Endothelial cell of umbilical vein (primary cell): ENCODE measurements at regions of chr9 and their contacts with region 1.

Region 1: GRCh38 chr9:132800038-132800648 is 77.9 kb downstream of the AK8 start:
- DNase-seq: peak; percentile 57
- H3K4me3 ChIP-seq: no peak overlapping the region
- H3K27ac ChIP-seq: no peak overlapping the region
- H3K4me1 ChIP-seq: no peaks in the 10 kb centered on the region
- H3K27me3 ChIP-seq: peaks cover under 1 to 10% of the 10 kb centered on the region in 2 experiments
- CTCF ChIP-seq: peak; percentile 72 to 75
- POLR2A ChIP-seq: no peak

Region 2: GRCh38 chr9:132507746-132508469 is 292.2 kb before region 1 on chr9:
- CTCF ChIA-PET with region 1: interaction called, 9 read pairs
- POLR2A ChIA-PET with region 1: no interaction called
- dilution Hi-C with region 1: no loop called
- intact Hi-C with region 1: loop called (anchors 1 kb)
- DNase-seq: peak; percentile 64
- H3K4me3 ChIP-seq: no peak overlapping the region
- H3K27ac ChIP-seq: no peak overlapping the region
- H3K4me1 ChIP-seq: no peaks in the 10 kb centered on the region
- H3K27me3 ChIP-seq: peaks cover 15 to 19% of the 10 kb centered on the region in 2 experiments
- CTCF ChIP-seq: peak; percentile 70 to 81
- POLR2A ChIP-seq: no peak

Region 3: DNA sequence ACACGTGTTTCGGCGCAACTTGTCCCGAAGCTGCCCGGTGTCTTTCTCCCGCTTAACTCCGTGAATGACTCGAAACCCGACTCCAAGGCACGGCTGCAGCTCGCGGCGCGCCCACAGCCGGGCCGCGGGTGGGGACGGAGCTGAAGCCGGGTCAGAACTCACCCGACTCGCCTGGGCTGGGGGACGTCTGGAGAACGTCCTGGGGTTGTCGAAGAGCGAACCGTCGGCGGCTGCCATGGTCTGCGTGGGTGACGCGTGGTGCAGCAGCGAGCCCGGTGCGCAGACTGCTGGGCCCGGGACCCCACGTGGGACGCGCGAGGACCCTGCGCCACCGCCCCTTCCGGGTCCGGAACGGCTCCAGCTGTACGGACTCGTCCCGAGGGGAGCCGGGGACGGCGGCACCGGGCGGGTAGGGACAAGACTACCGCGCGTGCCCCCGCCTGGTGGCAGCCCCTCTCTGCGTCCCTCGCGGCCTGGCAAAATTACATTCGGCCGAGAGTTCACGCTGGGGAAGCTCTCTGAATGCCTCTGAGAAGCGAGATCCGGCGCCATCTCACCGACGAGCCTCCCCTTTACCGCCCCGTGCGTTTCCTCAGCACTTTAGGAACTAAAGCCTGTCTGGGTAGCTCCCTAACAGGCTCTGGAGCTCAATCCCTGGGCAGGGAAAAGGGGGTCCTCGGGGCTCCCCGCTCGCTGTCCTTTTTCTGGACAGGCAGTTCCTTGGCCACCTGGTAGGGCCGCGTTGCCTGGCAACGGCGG is 130.3 kb before region 1 on chr9 and contains the start of gene DDX31:
- CTCF ChIA-PET with region 1: interaction called, 12 read pairs
- POLR2A ChIA-PET with region 1: no interaction called
- dilution Hi-C with region 1: no loop called
- intact Hi-C with region 1: loop called (anchors 1 kb)
- DNase-seq: peak; percentile 78
- H3K4me3 ChIP-seq: peak within 1 kb of the TSS; percentile 74 to 92 (median 78)
- H3K27ac ChIP-seq: peak within 1 kb of the TSS; percentile 90
- H3K4me1 ChIP-seq: peaks cover 21% of the 10 kb centered on the region
- H3K27me3 ChIP-seq: no peaks in the 10 kb centered on the region
- CTCF ChIP-seq: peak in 1 of 2 donors; percentile 3
- POLR2A ChIP-seq: peak; percentile 81
- total RNA-seq, gene DDX31: 16.3 and 16.4 TPM in 2 replicates

Region 4: DNA sequence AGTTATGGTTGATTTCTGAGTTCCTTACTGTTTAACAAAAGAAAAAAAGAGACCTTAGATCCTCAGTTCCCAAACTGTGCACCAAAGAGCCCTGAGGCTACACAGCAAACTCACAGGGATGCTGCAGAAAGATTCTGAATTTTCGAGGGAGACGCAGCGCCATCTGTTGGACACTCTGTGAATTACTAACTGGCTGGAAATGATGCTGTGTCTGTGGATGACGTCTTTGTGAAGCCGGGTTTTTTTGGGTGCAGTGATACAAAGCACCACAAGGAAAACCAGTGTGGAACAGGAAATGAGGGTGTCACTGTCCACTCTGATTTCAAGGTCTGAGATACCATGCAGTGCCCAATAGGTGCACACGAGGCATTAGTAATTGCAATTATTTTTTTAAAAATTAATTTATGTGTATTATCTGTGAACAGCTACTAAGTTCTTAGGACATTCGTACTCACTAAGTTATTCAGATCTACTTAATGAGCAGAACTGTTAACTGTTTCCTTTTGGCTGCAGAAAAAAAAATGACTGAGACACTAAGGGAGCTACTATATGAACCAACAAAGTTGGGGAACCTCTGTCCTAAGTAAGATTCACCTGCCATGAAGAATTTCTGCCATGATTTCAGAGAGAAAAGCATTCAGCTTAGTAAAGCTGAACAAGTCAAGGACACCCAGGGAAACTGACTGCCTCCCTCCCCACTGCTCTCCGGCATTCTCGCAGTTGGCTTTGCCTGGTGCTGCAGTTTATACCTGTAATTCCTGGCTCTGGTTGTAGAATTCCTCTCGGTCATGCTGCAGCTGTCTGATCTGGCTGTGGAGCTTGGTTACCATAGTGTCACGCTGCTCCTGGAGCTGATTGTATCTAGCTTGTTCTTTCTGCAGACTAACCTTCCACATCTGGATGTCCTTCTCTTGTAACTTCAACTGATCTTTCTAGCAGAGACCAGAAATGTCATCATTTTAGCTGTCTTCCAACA is 102.0 kb after region 1 on chr9:
- CTCF ChIA-PET with region 1: interaction called, 5 read pairs
- POLR2A ChIA-PET with region 1: no interaction called
- dilution Hi-C with region 1: no loop called
- intact Hi-C with region 1: loop called (anchors 5 kb)
- DNase-seq: peak; percentile 85
- H3K4me3 ChIP-seq: no peak overlapping the region
- H3K27ac ChIP-seq: no peak overlapping the region
- H3K4me1 ChIP-seq: no peaks in the 10 kb centered on the region
- H3K27me3 ChIP-seq: no peaks in the 10 kb centered on the region
- CTCF ChIP-seq: peak; percentile 84 to 97
- POLR2A ChIP-seq: no peak